AG04450 (cell line): ENCODE measurements at regions of chrX and their contacts with region 1.

Region 1: GRCh38 chrX:9656277-9656676 is 109.4 kb downstream of the GPR143 start:
- DNase-seq: no peak
- H3K4me3 ChIP-seq: no peak overlapping the region
- H3K27ac ChIP-seq: no peak overlapping the region
- H3K27me3 ChIP-seq: no peaks in the 10 kb centered on the region
- CTCF ChIP-seq: no peak

Region 2: GRCh38 chrX:8820910-8821527 is 835.3 kb before region 1 on chrX:
- CTCF ChIA-PET with region 1: interaction called, 11 read pairs
- POLR2A ChIA-PET with region 1: no interaction called
- DNase-seq: no peak
- H3K4me3 ChIP-seq: no peak overlapping the region
- H3K27ac ChIP-seq: no peak overlapping the region
- H3K27me3 ChIP-seq: no peaks in the 10 kb centered on the region
- CTCF ChIP-seq: no peak

Region 3: GRCh38 chrX:9611436-9612145 is 44.7 kb before region 1 on chrX:
- CTCF ChIA-PET with region 1: no interaction called
- POLR2A ChIA-PET with region 1: interaction called, 15 read pairs
- DNase-seq: no peak
- H3K4me3 ChIP-seq: no peak overlapping the region
- H3K27ac ChIP-seq: no peak overlapping the region
- H3K27me3 ChIP-seq: no peaks in the 10 kb centered on the region
- CTCF ChIP-seq: no peak